Naive thymus-derived CD8-positive, alpha-beta T cell (primary cell): ENCODE measurements at regions of chr2 and their contacts with region 1.

Region 1: DNA sequence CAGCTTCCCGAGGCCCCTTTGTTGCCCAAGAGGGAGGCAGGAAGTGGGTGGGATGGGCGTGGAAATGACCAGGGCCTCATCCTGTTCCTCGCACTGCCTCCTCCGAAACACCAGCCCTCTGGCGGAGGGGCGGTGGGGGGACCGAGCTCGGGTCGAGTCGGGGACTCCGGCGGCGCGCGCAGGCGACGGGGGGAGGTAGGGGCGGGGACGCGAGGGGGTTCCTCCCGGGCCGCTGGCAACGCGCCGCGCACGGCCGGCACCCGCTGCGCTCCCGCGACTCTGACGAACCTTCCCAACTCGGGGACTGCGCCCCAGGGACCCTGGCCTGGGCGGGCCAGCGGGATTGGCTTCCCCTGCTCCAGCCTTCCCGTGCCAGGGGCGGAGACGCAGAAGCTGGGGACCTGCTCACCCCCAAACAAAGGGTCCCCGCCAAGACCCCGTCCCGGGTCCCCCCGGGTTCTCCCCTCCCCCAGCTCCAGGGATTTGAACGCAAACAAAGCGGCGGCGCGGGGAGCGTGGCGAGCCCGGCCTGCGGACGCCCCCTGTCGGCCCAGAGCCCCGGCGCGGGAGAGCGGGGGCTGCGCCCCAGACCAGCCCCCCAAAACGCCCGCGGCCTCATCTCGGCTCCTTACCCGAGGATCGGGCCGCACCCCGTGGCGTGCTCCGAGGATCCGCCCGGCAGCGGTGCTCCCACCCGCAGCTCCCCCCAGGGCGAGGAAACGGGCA is 1.2 kb downstream of the SEMA4C start:
- DNase-seq: peak; percentile 43 to 82 (median 56)
- ATAC-seq: peak; percentile 25 to 37
- H3K4me3 Mint-ChIP-seq: peak overlapping the region; percentile 81 to 93 (median 86)
- H3K27ac Mint-ChIP-seq: peak overlapping the region in 7 of 10 donors; percentile 79 to 89 (median 87)
- H3K4me1 Mint-ChIP-seq: peaks cover 16 to 47% (median 39%) of the 10 kb centered on the region in 4 donors
- H3K27me3 Mint-ChIP-seq: no peaks in the 10 kb centered on the region

Region 2: DNA sequence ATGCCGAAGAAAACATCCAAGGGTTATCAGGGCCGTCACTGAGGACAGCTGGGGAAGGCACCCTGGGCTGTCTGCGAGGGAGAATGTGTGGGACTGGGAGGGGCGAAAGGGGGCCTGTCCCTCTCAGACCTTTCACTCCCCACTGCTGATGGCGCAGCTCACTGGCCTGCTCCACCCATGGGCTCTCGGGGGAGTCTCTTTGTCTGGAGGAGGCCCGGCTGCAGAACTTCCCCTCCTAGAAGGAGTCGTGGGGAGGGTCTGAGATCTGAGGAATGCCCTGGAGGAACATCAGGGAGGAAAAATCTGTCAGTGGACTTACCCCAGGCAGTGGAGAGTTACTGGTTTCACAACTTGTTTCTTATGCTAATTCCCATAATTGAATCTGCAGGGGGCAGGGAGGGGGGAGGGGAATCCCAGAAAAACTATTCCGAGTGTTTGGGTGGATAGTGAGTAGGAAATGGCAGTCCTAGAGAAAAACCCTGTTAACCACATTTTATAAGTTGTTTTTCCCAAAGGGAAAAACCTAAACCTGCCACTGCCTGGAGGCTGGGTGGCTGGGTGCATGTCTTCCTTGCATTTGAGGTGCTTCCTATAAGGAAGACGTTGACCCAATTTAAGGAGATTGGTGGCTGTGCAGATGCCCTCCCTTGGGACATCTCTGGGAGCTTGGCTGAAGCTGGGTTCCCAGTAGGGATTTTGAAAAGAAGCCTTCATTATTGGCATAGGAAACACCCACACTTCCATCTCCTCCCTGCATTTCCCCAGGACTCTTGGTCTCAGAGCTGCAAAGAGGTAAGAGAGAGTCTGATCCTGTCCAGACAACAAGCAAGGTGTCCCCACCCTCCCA is 12.9 kb after region 1 on chr2:
- POLR2A ChIA-PET with region 1: interaction called, 10 read pairs
- DNase-seq: no peak
- ATAC-seq: no peak
- H3K4me3 Mint-ChIP-seq: no peak overlapping the region
- H3K27ac Mint-ChIP-seq: no peak overlapping the region
- H3K4me1 Mint-ChIP-seq: peaks cover 0 to 7% (median 2%) of the 10 kb centered on the region in 4 donors
- H3K27me3 Mint-ChIP-seq: no peaks in the 10 kb centered on the region

Region 3: GRCh38 chr2:96891491-96892333 is 23.0 kb after region 1 on chr2:
- POLR2A ChIA-PET with region 1: interaction called, 10 read pairs
- DNase-seq: peak in 1 of 10 donors; percentile 47
- ATAC-seq: peak; percentile 74 to 82
- H3K4me3 Mint-ChIP-seq: peak overlapping the region in 9 of 10 donors; percentile 1 to 72 (median 42)
- H3K27ac Mint-ChIP-seq: peak overlapping the region; percentile 4 to 80 (median 54)
- H3K4me1 Mint-ChIP-seq: peaks cover 35 to 62% (median 58%) of the 10 kb centered on the region in 4 donors
- H3K27me3 Mint-ChIP-seq: no peaks in the 10 kb centered on the region

Region 4: DNA sequence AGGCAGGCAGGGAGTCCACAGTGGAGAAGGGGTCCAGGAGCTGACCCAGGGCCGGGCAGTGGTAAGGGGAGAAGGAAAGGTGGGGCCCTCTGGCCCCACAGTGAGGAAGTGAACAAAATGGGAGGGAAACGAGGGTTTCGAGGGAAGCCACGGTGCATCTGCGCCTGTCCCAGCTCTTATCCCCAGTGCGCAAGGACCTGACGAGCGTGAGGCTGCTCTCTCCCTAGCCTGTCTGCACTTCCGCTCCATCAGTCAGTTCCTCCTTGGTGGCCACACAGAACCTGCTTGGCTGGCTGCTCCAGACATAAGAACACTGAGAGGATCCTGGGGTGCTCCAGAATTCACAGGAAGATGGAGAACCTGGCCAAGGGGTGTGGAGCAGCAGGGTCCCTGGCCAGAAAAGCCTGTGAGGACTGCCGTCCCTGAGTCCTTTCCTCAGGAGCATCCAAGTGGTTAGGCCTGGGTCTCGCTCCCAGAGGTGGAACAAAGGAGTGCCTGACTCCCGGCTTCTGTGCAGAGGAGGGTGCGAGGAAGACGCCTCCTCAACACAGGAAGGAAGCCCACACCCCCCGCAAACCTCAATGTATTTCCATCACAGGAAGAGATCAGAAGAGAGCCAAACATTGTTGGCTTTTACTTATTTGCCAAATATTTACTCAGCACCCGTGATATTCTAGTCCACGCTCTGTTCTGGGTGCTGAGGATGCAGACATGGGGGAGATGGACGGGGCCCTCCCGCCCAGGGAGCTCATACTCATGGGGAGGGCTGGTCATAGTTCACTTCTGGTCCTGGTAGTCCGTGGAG is 44.9 kb after region 1 on chr2:
- POLR2A ChIA-PET with region 1: interaction called, 26 read pairs
- DNase-seq: peak; percentile 26 to 78 (median 44)
- ATAC-seq: peak; percentile 82 to 85
- H3K4me3 Mint-ChIP-seq: peak overlapping the region; percentile 73 to 95 (median 88)
- H3K27ac Mint-ChIP-seq: peak overlapping the region; percentile 87 to 98 (median 96)
- H3K4me1 Mint-ChIP-seq: peaks cover 37 to 79% (median 66%) of the 10 kb centered on the region in 4 donors
- H3K27me3 Mint-ChIP-seq: no peaks in the 10 kb centered on the region

Region 5: DNA sequence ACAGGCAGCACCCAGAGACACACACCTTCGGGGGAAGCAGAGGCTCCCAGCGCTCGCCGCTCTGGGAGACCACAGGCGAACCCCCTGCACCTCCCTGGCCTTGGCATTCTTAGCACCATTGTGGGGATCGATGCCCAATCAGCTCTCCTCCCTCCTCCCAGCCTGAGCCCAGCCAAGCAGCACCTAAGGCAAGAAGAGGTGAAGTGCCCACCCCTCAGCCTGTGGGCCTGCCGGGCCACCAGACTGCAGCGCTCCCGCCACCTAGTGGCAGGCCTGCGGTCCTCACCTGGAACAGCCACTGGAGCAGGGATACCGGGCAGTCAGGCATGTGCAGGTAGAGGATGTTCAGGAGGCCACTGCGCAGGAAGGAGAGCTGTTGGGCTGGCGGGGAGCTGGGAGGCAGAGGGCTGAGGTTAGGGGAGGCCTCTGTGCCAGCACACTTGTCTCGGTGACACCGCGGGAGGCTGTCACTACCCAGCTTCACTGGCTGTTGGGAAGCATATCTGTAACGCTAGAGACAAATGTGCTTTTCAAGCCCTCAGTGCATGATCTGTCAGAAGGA is 82.5 kb after region 1 on chr2:
- POLR2A ChIA-PET with region 1: interaction called, 28 read pairs
- DNase-seq: peak; percentile 63 to 89 (median 74)
- ATAC-seq: peak; percentile 98 to 100
- H3K4me3 Mint-ChIP-seq: peak overlapping the region in 2 of 10 donors; percentile 41 to 62
- H3K27ac Mint-ChIP-seq: peak overlapping the region in 5 of 10 donors; percentile 15 to 87 (median 38)
- H3K4me1 Mint-ChIP-seq: peaks cover 10 to 30% (median 26%) of the 10 kb centered on the region in 4 donors
- H3K27me3 Mint-ChIP-seq: no peaks in the 10 kb centered on the region